ENCODE measurements at regions of chr5 and their contacts with region 1.

Region 1: GRCh38 chr5:107571621-107572536 is 98.9 kb downstream of the EFNA5 start:
- DNase-seq: peak; percentile 97
- H3K4me3 ChIP-seq: peak overlapping the region; percentile 28 to 34
- H3K27ac ChIP-seq: peak overlapping the region; percentile 69 to 70
- H3K4me1 ChIP-seq: no peaks in the 10 kb centered on the region
- H3K27me3 ChIP-seq: no peaks in the 10 kb centered on the region
- CTCF ChIP-seq: peak; percentile 89 to 97 (median 92)
- POLR2A ChIP-seq: peak; percentile 20

Region 2: GRCh38 chr5:107067395-107067794 is 504.5 kb before region 1 on chr5:
- intact Hi-C with region 1: loop called (anchors 10 kb)
- DNase-seq: no peak
- H3K4me3 ChIP-seq: no peak overlapping the region
- H3K27ac ChIP-seq: no peak overlapping the region
- H3K4me1 ChIP-seq: no peaks in the 10 kb centered on the region
- H3K27me3 ChIP-seq: no peaks in the 10 kb centered on the region
- CTCF ChIP-seq: no peak
- POLR2A ChIP-seq: no peak

Region 3: GRCh38 chr5:107365320-107366109 is 206.4 kb before region 1 on chr5:
- intact Hi-C with region 1: loop called (anchors 10 kb)
- DNase-seq: no peak
- H3K4me3 ChIP-seq: no peak overlapping the region
- H3K27ac ChIP-seq: no peak overlapping the region
- H3K4me1 ChIP-seq: no peaks in the 10 kb centered on the region
- H3K27me3 ChIP-seq: no peaks in the 10 kb centered on the region
- CTCF ChIP-seq: no peak
- POLR2A ChIP-seq: no peak

Region 4: GRCh38 chr5:107516452-107517184 is 55.3 kb before region 1 on chr5:
- intact Hi-C with region 1: no loop called
- DNase-seq: no peak
- H3K4me3 ChIP-seq: no peak overlapping the region
- H3K27ac ChIP-seq: no peak overlapping the region
- H3K4me1 ChIP-seq: no peaks in the 10 kb centered on the region
- H3K27me3 ChIP-seq: no peaks in the 10 kb centered on the region
- CTCF ChIP-seq: no peak
- POLR2A ChIP-seq: no peak

Region 5: GRCh38 chr5:107661038-107661649 is 89.3 kb after region 1 on chr5:
- intact Hi-C with region 1: no loop called
- DNase-seq: no peak
- H3K4me3 ChIP-seq: no peak overlapping the region
- H3K27ac ChIP-seq: no peak overlapping the region
- H3K4me1 ChIP-seq: no peaks in the 10 kb centered on the region
- H3K27me3 ChIP-seq: no peaks in the 10 kb centered on the region
- CTCF ChIP-seq: no peak
- POLR2A ChIP-seq: no peak

Region 6: GRCh38 chr5:107698286-107698685 is 126.4 kb after region 1 on chr5:
- intact Hi-C with region 1: no loop called
- DNase-seq: no peak
- H3K4me3 ChIP-seq: no peak overlapping the region
- H3K27ac ChIP-seq: no peak overlapping the region
- H3K4me1 ChIP-seq: no peaks in the 10 kb centered on the region
- H3K27me3 ChIP-seq: no peaks in the 10 kb centered on the region
- CTCF ChIP-seq: no peak
- POLR2A ChIP-seq: no peak

Region 7: DNA sequence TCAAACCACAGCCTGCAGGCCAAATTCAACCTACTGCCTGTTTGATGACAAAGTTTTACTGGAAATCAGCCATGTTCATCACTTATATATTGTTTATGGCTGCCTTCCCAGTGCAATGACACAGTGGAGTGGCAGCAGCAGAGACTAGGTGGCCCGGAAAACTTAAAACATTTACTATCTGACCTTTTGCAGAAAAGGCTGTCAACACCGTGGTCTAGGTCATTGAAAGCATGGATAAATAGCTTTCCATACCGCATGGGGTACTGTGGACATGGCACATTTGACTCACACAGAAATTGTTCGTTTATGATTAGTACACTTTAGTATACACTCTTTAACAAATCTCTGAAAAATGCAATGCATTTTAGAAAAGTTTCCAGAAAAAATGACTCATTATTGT is 397.1 kb after region 1 on chr5:
- intact Hi-C with region 1: no loop called
- DNase-seq: no peak
- H3K4me3 ChIP-seq: no peak overlapping the region
- H3K27ac ChIP-seq: no peak overlapping the region
- H3K4me1 ChIP-seq: no peaks in the 10 kb centered on the region
- H3K27me3 ChIP-seq: no peaks in the 10 kb centered on the region
- CTCF ChIP-seq: no peak
- POLR2A ChIP-seq: no peak

Measured in prostate gland (tissue), 2 donors.